Right lobe of liver (tissue), 6 donors: ENCODE measurements at regions of chr6 and their contacts with region 1.

Region 1: GRCh38 chr6:43769526-43770416 is at the start of gene VEGFA:
- DNase-seq: peak; percentile 93 to 94 (median 94)
- ATAC-seq: peak; percentile 66 to 80 (median 70)
- H3K4me3 ChIP-seq: peak within 1 kb of the TSS; percentile 65 to 98 (median 93)
- H3K27ac ChIP-seq: peak within 1 kb of the TSS; percentile 92 to 96 (median 94)
- H3K4me1 ChIP-seq: peaks cover 0 to 39% (median 12%) of the 10 kb centered on the region in 4 donors
- H3K27me3 ChIP-seq: no peaks in the 10 kb centered on the region
- CTCF ChIP-seq: peak; percentile 92 to 97 (median 96)
- POLR2A ChIP-seq: peak; percentile 94
- total RNA-seq, gene VEGFA: 91.3 to 571 (median 132) TPM

Region 2: DNA sequence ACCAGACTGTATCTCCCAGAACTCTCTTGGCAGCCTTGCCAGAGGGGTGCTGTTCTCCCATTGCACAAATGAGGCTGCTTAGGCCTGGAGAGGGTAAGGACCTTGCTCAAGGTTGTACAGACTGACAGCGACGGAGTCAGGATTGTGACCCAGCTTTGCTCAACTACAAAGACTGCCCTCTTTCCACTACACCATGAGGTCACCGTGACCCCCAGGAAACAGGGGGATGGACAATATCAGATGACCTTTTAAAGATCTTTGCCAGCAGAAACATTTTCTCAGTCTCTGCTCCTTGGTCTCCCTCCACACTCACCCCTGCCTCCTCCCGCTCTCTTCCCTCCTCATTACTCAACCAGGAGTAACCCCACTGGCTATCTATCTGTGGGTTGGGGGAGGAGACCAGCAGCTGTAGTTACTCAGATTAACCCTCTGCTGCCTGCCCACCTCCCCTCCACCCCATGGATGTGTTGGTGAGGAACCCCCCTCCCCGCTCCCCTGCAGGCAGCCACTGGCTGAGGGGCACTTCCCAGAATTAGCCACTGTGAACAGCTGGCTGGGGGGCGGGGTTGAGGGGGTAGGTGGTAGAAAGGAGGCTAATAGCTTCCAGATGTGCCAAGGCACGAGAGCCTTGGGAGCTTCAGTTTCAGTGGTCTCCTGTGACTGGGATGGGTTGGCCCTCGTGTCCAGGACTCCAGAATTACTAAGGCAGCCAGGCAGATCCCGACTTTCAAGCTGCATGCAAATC is 55.3 kb before region 1 on chr6:
- intact Hi-C with region 1: loop called in 1 of 2 experiments (anchors 10 kb)
- DNase-seq: no peak
- ATAC-seq: no peak
- H3K4me3 ChIP-seq: no peak overlapping the region
- H3K27ac ChIP-seq: no peak overlapping the region
- H3K4me1 ChIP-seq: no peaks in the 10 kb centered on the region
- H3K27me3 ChIP-seq: no peaks in the 10 kb centered on the region
- CTCF ChIP-seq: no peak
- POLR2A ChIP-seq: no peak

Region 3: DNA sequence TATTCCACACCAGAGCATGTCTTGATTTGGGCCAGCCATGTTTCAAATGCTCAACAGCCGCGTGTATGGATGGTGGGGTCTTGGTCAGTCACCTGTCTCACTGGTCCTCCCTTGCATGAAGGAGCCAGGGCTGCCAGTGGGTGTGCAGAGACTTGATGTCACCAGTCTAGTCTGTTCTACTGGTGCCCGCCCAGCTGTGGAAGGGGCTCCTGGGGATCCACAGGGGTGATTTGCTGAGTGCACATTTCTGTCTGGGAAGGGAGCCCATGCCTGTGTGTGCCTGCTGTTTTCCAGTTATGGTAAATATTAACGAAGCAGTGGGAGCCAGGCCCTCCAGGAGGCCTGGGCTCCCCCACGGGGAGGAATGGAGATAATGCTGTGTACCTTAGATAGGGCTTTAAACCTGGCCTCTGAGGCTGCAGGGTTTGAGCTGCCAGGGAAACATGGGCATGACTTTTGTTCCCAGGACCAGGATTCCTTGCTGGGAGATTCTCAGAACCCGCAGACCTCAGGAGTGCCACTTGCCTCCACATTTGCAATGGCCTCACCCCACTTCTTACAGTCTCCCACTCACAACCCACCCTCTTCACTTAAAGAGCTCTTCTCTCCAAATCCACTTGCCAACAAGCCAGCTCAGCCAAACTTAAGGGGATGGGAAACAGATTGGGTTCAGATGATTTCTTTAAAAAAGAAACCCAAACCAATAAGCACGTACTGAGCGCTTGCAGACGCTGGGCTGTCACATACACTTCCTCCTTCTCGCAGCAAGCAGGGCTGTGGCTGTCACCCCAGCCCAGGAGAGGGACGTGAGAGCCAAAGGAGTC is 54.3 kb after region 1 on chr6:
- intact Hi-C with region 1: loop called (anchors 10 kb)
- DNase-seq: peak; percentile 71 to 92 (median 88)
- ATAC-seq: peak; percentile 91 to 95 (median 94)
- H3K4me3 ChIP-seq: peak overlapping the region in 1 of 3 donors; percentile 26
- H3K27ac ChIP-seq: peak overlapping the region; percentile 61 to 72 (median 65)
- H3K4me1 ChIP-seq: peaks cover 0 to 41% (median 17%) of the 10 kb centered on the region in 4 donors
- H3K27me3 ChIP-seq: no peaks in the 10 kb centered on the region
- CTCF ChIP-seq: peak in 2 of 4 donors; percentile 8 to 10
- POLR2A ChIP-seq: no peak

Region 4: GRCh38 chr6:43900911-43901732 is 131.4 kb after region 1 on chr6:
- intact Hi-C with region 1: no loop called
- DNase-seq: peak; percentile 33 to 80 (median 70)
- ATAC-seq: peak; percentile 88 to 91 (median 90)
- H3K4me3 ChIP-seq: no peak overlapping the region
- H3K27ac ChIP-seq: peak overlapping the region; percentile 54 to 78 (median 64)
- H3K4me1 ChIP-seq: peaks cover 0 to 37% (median 17%) of the 10 kb centered on the region in 4 donors
- H3K27me3 ChIP-seq: no peaks in the 10 kb centered on the region
- CTCF ChIP-seq: no peak
- POLR2A ChIP-seq: peak; percentile 16

Region 5: DNA sequence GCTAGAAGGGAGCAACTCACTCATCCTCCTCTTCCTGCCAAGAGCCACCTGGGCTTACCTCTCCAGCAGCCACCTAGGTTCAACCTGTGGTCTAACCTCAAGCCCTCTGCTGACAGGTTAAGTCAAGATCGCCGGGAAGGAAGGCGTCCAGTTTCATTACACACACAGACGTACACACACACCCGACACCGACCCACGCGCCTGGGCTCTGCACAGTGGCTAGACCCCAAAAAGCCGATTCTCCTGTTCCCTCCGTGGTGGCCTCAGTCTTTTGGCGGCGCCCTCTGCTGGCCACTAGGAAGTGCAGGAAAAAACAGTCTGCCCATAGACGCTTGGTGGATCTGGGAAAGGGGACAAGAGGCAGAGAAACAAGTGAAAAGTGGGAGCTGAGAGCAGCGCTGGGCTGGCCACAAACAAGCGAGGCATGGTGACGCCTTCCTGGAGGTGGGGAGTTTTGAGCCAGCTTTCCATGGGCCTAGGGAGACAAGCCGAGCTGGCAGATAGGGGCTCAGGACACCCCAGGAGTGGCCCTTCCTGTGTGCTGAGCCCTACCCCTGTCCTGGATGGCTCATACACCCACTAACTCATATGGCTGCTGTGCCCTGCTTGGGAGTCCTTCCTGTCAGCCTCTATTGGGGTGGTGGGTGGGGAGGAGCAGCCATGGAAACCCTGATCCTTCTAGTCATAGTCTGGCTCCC is 304.8 kb after region 1 on chr6:
- intact Hi-C with region 1: loop called in 1 of 2 experiments (anchors 5 kb)
- DNase-seq: peak; percentile 66 to 77 (median 73)
- ATAC-seq: peak; percentile 51 to 69 (median 61)
- H3K4me3 ChIP-seq: peak overlapping the region in 1 of 3 donors; percentile 43
- H3K27ac ChIP-seq: peak overlapping the region in 1 of 3 donors; percentile 87
- H3K4me1 ChIP-seq: peaks cover 0 to 32% (median 4%) of the 10 kb centered on the region in 4 donors
- H3K27me3 ChIP-seq: no peaks in the 10 kb centered on the region
- CTCF ChIP-seq: peak; percentile 82 to 89 (median 88)
- POLR2A ChIP-seq: no peak

Region 6: GRCh38 chr6:44086931-44087574 is 317.3 kb after region 1 on chr6:
- intact Hi-C with region 1: loop called in 1 of 2 experiments (anchors 5 kb)
- DNase-seq: peak; percentile 82 to 90 (median 88)
- ATAC-seq: peak; percentile 81 to 90 (median 87)
- H3K4me3 ChIP-seq: no peak overlapping the region
- H3K27ac ChIP-seq: no peak overlapping the region
- H3K4me1 ChIP-seq: peaks cover 0 to 4% (median 0%) of the 10 kb centered on the region in 4 donors
- H3K27me3 ChIP-seq: no peaks in the 10 kb centered on the region
- CTCF ChIP-seq: peak in 1 of 4 donors; percentile 4
- POLR2A ChIP-seq: no peak